A549 (cell line): ENCODE measurements at regions of chr16 and their contacts with region 1.

Region 1: DNA sequence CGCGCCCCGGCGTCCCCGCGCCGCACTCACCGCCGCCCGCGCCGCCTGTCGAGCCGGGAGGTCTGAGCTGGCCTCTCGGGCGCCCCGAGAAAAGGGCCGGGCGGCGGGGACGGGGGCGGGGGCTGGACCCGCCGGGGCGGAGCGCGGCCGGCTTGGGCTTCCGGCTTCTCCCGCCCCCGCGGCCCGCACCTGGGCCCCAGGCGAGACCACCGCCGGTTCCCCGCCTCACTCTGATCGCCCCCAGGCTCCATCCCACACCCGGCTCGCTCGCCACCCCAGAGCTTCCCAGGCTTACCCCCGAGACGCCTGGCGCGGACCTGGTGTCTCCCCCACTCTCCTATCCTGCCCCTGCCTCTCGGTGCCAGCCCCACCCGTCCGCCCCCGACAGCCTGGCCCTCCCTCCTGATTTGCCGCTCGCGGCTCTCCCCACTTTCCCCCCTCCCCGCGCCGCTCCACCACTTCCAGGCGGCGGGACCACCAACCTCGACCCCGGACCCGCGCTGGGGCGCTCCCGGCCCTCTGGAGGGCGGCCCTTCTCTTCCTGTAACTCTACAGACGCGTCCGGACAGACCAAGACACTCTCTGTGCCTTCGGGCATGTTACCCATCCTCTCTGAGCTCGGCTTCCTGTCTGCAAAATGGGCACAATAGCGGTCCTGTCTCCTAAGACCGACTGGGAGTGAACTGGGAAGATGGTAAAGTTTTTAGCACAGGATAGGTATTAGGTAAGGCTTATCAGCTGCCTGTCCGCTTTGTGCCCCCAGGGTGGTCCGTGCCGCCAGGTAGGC is at the start of gene LITAF:
- DNase-seq: peak; percentile 55 to 67
- ATAC-seq: peak; percentile 85 to 90
- H3K4me3 ChIP-seq: peak within 1 kb of the TSS; percentile 93
- H3K27ac ChIP-seq: peak within 1 kb of the TSS; percentile 99 to 100
- H3K4me1 ChIP-seq: peaks cover 38% of the 10 kb centered on the region
- CTCF ChIP-seq: no peak; the same call in 2 of the 3 replicates
- EP300 ChIP-seq: no peak
- POLR2A ChIP-seq: peak; percentile 58
- RAD21 ChIP-seq: no peak; a peak in 2 of 5 replicates
- polyA plus RNA-seq, gene LITAF: 197 and 216 TPM in 2 replicates

Region 2: DNA sequence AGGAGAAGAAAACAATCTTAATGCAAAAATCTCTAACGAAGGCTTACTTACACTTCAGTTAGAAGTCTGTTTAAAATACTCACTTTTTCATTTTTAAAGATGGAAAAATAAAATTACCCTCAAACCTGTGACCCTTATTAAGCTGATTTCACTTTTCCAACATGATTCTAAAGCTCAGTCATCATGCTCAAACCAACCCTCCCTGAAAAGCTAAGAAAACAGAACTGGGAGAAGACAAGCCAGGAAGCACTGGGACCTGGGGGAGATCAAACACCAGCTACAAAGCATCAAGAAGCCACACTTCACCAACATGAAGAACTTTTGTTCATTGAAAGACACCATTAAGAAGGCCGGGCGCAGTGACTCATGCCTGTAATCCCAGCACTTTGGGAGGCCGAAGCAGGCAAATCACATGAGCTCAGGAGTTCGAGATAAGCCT is 89.2 kb before region 1 on chr16:
- CTCF ChIA-PET with region 1: no interaction called
- POLR2A ChIA-PET with region 1: interaction called, 11 read pairs
- DNase-seq: peak in 1 of 2 experiments; percentile 81
- ATAC-seq: peak in 1 of 2 experiments; percentile 38; a peak in 3 of 6 replicates
- H3K4me3 ChIP-seq: no peak overlapping the region
- H3K27ac ChIP-seq: peak overlapping the region; percentile 88 to 89
- H3K4me1 ChIP-seq: peaks cover 59% of the 10 kb centered on the region
- CTCF ChIP-seq: no peak
- EP300 ChIP-seq: no peak
- POLR2A ChIP-seq: no peak
- RAD21 ChIP-seq: no peak

Region 3: DNA sequence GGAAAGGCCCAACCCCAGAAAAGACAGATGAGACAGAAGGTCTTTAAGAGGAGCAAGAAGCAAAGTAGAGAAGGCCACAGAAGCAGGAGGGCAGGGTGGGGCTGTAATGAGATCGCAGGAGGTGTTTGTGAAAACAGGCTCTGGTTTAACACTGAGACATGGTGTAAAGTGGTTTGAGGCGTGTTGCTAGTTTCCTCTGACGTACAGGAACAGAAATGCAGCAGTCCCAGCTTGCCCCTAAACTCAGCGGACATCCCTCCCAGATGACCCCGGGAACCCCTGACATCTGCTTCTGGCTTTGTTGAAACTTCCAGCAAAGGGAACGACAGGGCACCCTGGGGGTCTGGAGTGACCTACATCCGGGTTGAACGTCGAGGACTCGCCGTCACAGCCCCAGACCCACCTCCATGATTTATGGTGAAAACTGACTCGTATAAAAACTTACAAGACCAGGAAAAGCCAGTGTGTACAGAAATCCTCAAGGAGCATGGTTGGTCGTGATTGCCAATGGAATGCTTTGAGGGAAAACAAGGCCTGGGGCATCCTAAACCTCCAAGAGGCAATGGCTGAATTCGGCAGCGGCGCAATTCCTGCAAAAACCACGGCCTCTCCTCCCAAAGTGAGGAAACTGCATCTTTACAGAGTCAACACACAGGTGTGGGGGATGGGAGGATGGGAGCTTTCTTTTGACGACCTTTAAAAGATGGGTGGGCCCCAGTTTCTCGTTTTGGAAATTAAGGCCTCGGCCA is 26.2 kb before region 1 on chr16:
- CTCF ChIA-PET with region 1: no interaction called
- POLR2A ChIA-PET with region 1: interaction called, 11 read pairs
- DNase-seq: no peak
- ATAC-seq: no peak; a peak in 1 of 6 replicates
- H3K4me3 ChIP-seq: no peak overlapping the region
- H3K27ac ChIP-seq: peak overlapping the region in 1 of 2 experiments; percentile 79; a peak in 3 of 6 replicates
- H3K4me1 ChIP-seq: peaks cover 52% of the 10 kb centered on the region
- CTCF ChIP-seq: no peak
- EP300 ChIP-seq: no peak
- POLR2A ChIP-seq: no peak
- RAD21 ChIP-seq: no peak

Region 4: DNA sequence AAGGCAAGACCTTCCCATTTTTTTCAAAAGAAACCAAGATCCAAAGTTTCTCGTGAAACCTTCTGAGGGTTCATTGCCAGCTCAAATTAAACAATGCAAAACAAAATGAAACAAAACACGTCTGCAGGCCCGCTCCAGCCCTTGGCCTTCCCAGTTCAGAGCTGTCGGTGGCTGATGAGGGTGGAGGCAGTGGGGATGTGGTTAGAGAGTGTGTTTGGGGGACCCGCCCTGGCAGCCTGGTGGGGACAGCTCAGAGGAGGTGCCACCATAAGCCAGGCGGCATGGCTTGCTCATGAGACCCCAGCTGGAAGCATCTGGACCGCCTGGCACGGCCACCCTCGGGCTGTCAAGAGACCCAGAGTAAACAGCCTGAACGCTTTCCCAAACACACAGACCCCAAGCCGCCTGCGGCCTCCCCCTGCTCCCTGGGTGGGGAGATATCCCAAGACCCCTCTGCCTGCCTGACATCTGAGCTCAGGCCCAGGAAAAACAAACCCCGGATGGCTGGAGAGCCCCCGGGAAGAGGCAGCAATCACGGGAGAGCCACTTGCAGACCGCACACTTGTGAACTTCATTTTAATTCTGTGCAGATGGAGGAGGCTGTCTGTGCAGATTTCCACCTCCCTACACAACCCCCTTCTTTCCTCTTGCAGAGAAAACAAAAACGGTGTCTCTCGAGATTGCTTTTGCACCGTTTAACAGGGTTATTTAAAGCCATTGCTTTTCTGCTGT is 35.0 kb after region 1 on chr16:
- CTCF ChIA-PET with region 1: no interaction called
- POLR2A ChIA-PET with region 1: no interaction called
- DNase-seq: no peak
- ATAC-seq: peak; percentile 41 to 66; a peak in 4 of 6 replicates
- H3K4me3 ChIP-seq: no peak overlapping the region
- H3K27ac ChIP-seq: peak overlapping the region; percentile 32 to 77; a peak in 4 of 6 replicates
- H3K4me1 ChIP-seq: peaks cover 15% of the 10 kb centered on the region; the same call in 2 of the 3 replicates
- CTCF ChIP-seq: no peak
- EP300 ChIP-seq: no peak
- POLR2A ChIP-seq: no peak
- RAD21 ChIP-seq: no peak

Region 5: GRCh38 chr16:11706180-11706742 is 119.2 kb after region 1 on chr16:
- CTCF ChIA-PET with region 1: no interaction called
- POLR2A ChIA-PET with region 1: no interaction called
- DNase-seq: no peak
- ATAC-seq: no peak; a peak in 2 of 6 replicates
- H3K4me3 ChIP-seq: no peak overlapping the region
- H3K27ac ChIP-seq: no peak overlapping the region; a peak in 1 of 6 replicates
- H3K4me1 ChIP-seq: peaks cover 14% of the 10 kb centered on the region
- CTCF ChIP-seq: no peak
- EP300 ChIP-seq: no peak
- POLR2A ChIP-seq: no peak
- RAD21 ChIP-seq: no peak

Region 6: DNA sequence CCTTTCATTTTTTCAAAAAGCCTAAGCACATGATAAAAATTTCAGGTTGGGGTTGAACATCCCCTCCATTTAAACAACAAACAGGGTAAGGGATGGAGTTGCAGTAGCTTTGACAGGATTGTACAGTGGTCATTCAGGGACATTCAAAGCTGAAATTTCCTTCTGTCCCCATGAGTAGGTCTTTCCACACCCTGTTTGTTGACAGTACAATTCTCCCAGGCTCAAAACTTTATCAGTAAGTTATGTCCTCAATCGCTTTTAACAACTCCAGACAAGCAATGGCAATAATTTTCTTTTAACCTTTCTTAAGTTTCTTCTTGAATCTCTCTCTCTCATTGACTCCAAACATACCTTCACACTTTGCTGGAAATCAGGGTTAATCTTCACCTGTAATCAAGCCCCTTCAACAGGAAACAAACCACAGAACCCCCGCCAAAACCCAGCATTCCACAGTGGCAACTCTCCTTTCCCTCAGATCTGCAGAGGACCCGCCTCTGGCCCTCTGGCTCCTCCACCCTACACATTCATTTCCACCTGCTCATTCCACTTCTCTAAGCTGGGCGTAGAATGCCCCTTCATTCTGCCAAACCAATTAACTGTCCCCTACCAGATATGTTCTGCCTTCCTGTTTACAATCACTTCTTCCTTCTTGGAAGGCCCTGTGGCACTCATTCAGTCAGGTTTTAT is 134.9 kb after region 1 on chr16:
- CTCF ChIA-PET with region 1: no interaction called
- POLR2A ChIA-PET with region 1: no interaction called
- DNase-seq: no peak
- ATAC-seq: no peak
- H3K4me3 ChIP-seq: no peak overlapping the region
- H3K27ac ChIP-seq: no peak overlapping the region
- H3K4me1 ChIP-seq: peaks cover 15% of the 10 kb centered on the region; the same call in 2 of the 3 replicates
- CTCF ChIP-seq: no peak
- EP300 ChIP-seq: no peak
- POLR2A ChIP-seq: no peak
- RAD21 ChIP-seq: no peak